Colonic mucosa (tissue), 4 donors: ENCODE measurements at regions of chr11 and their contacts with region 1.

Region 1: GRCh38 chr11:59283825-59284772 is 71.4 kb upstream of the MPEG1 start:
- DNase-seq: peak; percentile 58
- H3K4me3 ChIP-seq: no peak overlapping the region
- H3K27ac ChIP-seq: no peak overlapping the region
- H3K4me1 ChIP-seq: no peaks in the 10 kb centered on the region
- H3K27me3 ChIP-seq: no peaks in the 10 kb centered on the region
- CTCF ChIP-seq: peak; percentile 85

Region 2: GRCh38 chr11:58866788-58867187 is 417.3 kb before region 1 on chr11:
- intact Hi-C with region 1: no loop called
- DNase-seq: no peak
- H3K4me3 ChIP-seq: no peak overlapping the region
- H3K27ac ChIP-seq: no peak overlapping the region
- H3K4me1 ChIP-seq: no peaks in the 10 kb centered on the region
- H3K27me3 ChIP-seq: no peaks in the 10 kb centered on the region
- CTCF ChIP-seq: no peak

Region 3: GRCh38 chr11:59171508-59172322 is 112.4 kb before region 1 on chr11 and contains the start of gene DTX4:
- intact Hi-C with region 1: loop called (anchors 2 kb)
- DNase-seq: peak; percentile 97
- H3K4me3 ChIP-seq: peak within 1 kb of the TSS; percentile 61
- H3K27ac ChIP-seq: peak within 1 kb of the TSS; percentile 91
- H3K4me1 ChIP-seq: peaks cover 5% of the 10 kb centered on the region
- H3K27me3 ChIP-seq: no peaks in the 10 kb centered on the region
- CTCF ChIP-seq: peak; percentile 90
- total RNA-seq, gene DTX4: 54.7 to 59.7 TPM

Region 4: DNA sequence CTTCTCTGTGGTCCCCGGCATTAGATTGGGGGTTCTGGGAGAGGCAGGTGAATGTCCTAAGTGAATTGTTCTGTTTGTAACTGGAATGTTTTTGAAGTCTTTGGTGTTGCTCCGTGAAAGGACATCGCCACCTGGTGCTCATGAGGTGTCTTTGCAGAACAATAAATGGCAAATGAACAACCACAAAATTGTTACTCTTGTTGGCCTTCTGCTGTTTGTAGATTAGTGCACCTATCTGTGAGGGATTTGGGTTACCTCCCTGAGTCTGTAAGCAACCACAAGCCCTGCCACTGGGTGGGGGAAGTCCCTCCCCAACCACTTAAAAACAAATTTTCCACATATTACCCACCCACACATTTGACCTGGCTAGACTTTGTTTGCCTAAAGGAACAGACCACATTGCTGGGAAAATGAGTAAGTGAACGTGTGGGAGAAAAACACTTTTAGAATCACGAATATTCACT is 76.1 kb before region 1 on chr11:
- intact Hi-C with region 1: loop called (anchors 10 kb)
- DNase-seq: no peak
- H3K4me3 ChIP-seq: no peak overlapping the region
- H3K27ac ChIP-seq: no peak overlapping the region
- H3K4me1 ChIP-seq: no peaks in the 10 kb centered on the region
- H3K27me3 ChIP-seq: no peaks in the 10 kb centered on the region
- CTCF ChIP-seq: peak; percentile 53

Region 5: GRCh38 chr11:59429924-59430516 is 145.9 kb after region 1 on chr11:
- intact Hi-C with region 1: loop called (anchors 10 kb)
- DNase-seq: peak; percentile 49
- H3K4me3 ChIP-seq: no peak overlapping the region
- H3K27ac ChIP-seq: no peak overlapping the region
- H3K4me1 ChIP-seq: no peaks in the 10 kb centered on the region
- H3K27me3 ChIP-seq: no peaks in the 10 kb centered on the region
- CTCF ChIP-seq: peak; percentile 73